ENCODE measurements at regions of chr17 and their contacts with region 1.

Region 1: GRCh38 chr17:7239091-7240027 is at the start of gene PHF23:
- DNase-seq: peak; percentile 98 to 99 (median 99)
- H3K4me3 ChIP-seq: peak within 1 kb of the TSS; percentile 59 to 100 (median 95)
- H3K27ac ChIP-seq: peak within 1 kb of the TSS; percentile 58 to 100 (median 99)
- H3K27me3 ChIP-seq: no peaks in the 10 kb centered on the region
- CTCF ChIP-seq: peak in 7 of 56 donors; percentile 16 to 32 (median 22)
- total RNA-seq, gene PHF23: 21.3 to 54.1 (median 37.2) TPM

Region 2: GRCh38 chr17:7252176-7253043 is 13.1 kb after region 1 on chr17 and contains the start of gene ELP5:
- intact Hi-C with region 1: loop called (anchors 1 kb)
- DNase-seq: peak; percentile 85 to 93 (median 90)
- H3K4me3 ChIP-seq: peak within 1 kb of the TSS; percentile 56 to 100 (median 94)
- H3K27ac ChIP-seq: peak within 1 kb of the TSS; percentile 96 to 100 (median 99)
- H3K27me3 ChIP-seq: no peaks in the 10 kb centered on the region
- CTCF ChIP-seq: peak in 54 of 56 donors; percentile 19 to 71 (median 49)
- total RNA-seq, gene ELP5: 25.8 to 51.7 (median 36.8) TPM

Region 3: DNA sequence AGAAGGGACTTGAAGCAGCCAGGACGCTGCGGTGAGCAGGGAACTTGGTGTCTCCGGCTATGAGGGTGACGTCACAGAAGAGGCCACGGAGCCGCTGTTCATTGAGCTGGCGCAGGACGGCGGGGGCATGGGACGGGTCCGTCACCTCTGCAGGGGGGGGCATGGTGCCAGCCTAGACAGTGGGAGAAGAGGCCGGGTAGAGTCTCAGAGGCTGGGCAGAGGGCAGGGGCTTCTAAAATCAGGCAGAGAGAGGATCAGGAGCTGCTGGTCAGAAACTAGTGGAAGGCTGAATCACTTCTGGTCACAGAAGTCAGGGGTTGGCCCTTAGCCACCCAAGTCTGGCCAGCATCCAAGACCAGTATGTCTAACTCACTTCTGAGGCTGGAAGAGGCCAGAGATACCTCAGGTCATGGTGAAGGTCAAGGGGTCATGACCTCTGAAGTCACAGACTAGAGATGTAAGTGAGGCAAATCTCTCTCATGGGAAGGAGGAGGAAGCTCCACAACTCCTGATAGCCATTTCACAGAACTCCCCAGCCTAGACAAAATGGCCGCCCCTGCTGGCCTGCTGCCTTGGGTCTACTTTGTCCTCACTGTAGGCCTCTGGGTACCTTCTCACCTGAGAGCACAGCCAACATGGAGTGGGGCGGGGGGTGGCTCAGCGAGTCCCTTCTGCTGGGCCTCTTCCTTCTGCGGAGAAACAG is 227.4 kb after region 1 on chr17:
- intact Hi-C with region 1: no loop called
- DNase-seq: peak in 2 of 10 donors; percentile 34 to 40
- H3K4me3 ChIP-seq: no peak overlapping the region
- H3K27ac ChIP-seq: peak overlapping the region in 48 of 59 donors; percentile 1 to 79 (median 46)
- H3K27me3 ChIP-seq: no peaks in the 10 kb centered on the region
- CTCF ChIP-seq: no peak

Region 4: DNA sequence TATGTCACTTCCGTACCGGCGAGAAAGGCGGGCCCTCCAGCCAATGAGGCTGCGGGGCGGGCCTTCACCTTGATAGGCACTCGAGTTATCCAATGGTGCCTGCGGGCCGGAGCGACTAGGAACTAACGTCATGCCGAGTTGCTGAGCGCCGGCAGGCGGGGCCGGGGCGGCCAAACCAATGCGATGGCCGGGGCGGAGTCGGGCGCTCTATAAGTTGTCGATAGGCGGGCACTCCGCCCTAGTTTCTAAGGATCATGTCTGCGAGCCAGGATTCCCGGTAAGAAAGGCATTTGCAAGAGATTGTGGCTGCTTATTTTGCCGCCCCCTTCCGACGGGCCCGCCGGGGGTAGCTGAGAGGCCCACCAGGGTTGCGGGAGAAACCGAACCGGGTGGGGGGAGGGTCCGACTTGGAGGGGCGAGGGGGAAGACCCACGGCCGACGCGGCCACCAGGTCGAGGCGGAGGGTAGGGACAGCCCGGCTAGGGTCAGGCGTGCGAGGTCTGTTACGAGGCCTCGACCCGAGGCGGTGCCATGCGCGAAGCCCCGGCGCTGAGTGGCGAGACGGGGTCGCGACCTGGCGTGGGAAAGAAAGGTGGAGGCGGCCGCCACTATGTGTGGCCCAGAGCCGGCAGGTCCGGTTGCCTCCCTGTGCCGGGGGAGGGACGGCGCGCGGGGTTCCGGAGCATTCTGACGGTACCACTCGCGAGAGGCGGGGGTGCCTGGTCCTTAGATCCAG is 333.4 kb after region 1 on chr17:
- intact Hi-C with region 1: loop called (anchors 10 kb)
- DNase-seq: peak in 9 of 10 donors; percentile 99 to 100 (median 100)
- H3K4me3 ChIP-seq: peak overlapping the region; percentile 64 to 100 (median 99)
- H3K27ac ChIP-seq: peak overlapping the region; percentile 86 to 100 (median 98)
- H3K27me3 ChIP-seq: no peaks in the 10 kb centered on the region
- CTCF ChIP-seq: peak in 17 of 56 donors; percentile 4 to 42 (median 16)